ENCODE measurements at regions of chr19 and their contacts with region 1.

Region 1: GRCh38 chr19:1020868-1021425 is at the start of gene TMEM259:
- DNase-seq: peak; percentile 98
- H3K4me3 Mint-ChIP-seq: peak within 1 kb of the TSS; percentile 95
- H3K27ac Mint-ChIP-seq: peak within 1 kb of the TSS; percentile 99
- H3K4me1 Mint-ChIP-seq: peaks cover 43% of the 10 kb centered on the region
- H3K27me3 Mint-ChIP-seq: peaks cover 3% of the 10 kb centered on the region
- total RNA-seq, gene TMEM259: 107 to 109 TPM

Region 2: DNA sequence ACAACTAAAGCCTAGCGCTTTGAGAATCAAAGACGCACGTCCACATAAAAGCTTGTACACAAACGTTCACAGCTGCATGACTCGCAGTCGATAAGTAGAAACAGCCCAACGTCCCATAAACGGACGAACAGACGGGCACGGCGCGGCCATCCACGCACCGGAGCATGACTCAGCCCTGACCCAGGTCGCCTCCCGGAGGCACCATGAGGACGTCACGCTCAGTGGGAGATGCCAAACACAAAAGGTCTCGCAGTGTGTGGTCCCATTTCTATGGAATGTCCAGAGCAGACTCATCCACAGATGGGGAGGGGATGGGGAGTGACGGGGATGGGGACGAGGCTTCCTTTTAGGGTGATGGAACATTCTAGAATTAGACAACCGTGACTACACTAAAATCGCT is 397.0 kb before region 1 on chr19:
- CTCF ChIA-PET with region 1: no interaction called
- POLR2A ChIA-PET with region 1: no interaction called
- intact Hi-C with region 1: no loop called
- DNase-seq: no peak
- H3K4me3 Mint-ChIP-seq: no peak overlapping the region
- H3K27ac Mint-ChIP-seq: no peak overlapping the region
- H3K4me1 Mint-ChIP-seq: peaks cover 2% of the 10 kb centered on the region
- H3K27me3 Mint-ChIP-seq: no peaks in the 10 kb centered on the region

Region 3: DNA sequence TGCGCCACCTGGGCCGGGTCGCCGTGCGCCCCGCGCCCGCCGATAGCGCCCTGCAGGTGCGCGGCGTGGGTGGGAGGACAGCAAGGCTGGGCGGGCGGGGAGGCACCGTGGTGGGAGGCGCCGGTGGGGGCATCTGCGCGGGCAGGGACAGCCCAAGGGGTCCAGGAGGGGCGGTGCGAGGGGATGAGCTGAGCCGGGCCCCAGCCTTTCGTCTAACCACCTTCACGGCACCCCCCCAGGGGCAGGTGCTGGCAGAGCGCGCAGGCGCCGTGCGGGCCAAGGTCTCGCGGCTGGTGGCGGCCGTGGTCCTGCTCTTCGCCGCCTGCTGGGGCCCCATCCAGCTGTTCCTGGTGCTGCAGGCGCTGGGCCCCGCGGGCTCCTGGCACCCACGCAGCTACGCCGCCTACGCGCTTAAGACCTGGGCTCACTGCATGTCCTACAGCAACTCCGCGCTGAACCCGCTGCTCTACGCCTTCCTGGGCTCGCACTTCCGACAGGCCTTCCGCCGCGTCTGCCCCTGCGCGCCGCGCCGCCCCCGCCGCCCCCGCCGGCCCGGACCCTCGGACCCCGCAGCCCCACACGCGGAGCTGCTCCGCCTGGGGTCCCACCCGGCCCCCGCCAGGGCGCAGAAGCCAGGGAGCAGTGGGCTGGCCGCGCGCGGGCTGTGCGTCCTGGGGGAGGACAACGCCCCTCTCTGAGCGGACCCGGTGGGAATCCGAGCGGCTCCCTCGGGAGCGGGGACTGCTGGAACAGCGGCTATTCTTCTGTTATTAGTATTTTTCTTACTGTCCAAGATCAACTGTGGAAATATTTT is 100.7 kb before region 1 on chr19:
- CTCF ChIA-PET with region 1: no interaction called
- POLR2A ChIA-PET with region 1: interaction called, 5 read pairs
- intact Hi-C with region 1: loop called (anchors 2 kb)
- DNase-seq: peak; percentile 78
- H3K4me3 Mint-ChIP-seq: peak overlapping the region; percentile 75
- H3K27ac Mint-ChIP-seq: peak overlapping the region; percentile 85
- H3K4me1 Mint-ChIP-seq: peaks cover 19% of the 10 kb centered on the region
- H3K27me3 Mint-ChIP-seq: no peaks in the 10 kb centered on the region

Region 4: DNA sequence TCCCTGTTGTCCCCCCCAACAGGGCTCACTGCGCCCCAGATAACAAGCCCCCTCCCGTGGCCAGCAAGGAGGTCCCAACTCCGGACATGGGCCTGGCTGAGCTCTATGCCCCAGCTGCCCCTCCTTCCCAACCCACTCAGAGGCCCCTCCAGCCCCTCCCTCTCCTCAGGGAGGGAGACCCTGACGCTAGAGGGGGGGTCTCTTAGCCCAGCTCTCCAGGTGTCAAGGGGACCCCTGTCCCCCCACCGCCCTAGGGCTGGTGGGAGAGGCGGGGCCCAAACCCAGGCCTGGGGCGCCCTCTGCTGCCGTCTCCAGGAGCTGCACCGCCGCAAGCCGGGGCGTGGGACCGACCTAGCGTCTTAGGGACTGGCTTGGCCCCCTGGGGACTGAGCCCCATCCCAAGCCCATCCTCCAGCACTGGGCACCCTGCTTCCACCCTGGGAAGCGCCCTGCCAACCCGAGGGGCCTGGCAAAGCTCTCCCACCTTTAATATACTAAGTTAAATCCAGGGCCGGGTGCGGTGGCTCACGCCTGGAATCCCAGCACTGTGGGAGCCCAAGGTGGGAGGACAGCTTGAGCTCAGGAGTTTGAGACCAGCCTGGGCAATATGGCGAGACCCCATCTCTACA is 19.3 kb before region 1 on chr19:
- CTCF ChIA-PET with region 1: interaction called, 3 read pairs
- POLR2A ChIA-PET with region 1: no interaction called
- intact Hi-C with region 1: loop called (anchors 2 kb)
- DNase-seq: peak; percentile 78
- H3K4me3 Mint-ChIP-seq: no peak overlapping the region
- H3K27ac Mint-ChIP-seq: no peak overlapping the region
- H3K4me1 Mint-ChIP-seq: peaks cover 11% of the 10 kb centered on the region
- H3K27me3 Mint-ChIP-seq: peaks cover 29% of the 10 kb centered on the region

Region 5: DNA sequence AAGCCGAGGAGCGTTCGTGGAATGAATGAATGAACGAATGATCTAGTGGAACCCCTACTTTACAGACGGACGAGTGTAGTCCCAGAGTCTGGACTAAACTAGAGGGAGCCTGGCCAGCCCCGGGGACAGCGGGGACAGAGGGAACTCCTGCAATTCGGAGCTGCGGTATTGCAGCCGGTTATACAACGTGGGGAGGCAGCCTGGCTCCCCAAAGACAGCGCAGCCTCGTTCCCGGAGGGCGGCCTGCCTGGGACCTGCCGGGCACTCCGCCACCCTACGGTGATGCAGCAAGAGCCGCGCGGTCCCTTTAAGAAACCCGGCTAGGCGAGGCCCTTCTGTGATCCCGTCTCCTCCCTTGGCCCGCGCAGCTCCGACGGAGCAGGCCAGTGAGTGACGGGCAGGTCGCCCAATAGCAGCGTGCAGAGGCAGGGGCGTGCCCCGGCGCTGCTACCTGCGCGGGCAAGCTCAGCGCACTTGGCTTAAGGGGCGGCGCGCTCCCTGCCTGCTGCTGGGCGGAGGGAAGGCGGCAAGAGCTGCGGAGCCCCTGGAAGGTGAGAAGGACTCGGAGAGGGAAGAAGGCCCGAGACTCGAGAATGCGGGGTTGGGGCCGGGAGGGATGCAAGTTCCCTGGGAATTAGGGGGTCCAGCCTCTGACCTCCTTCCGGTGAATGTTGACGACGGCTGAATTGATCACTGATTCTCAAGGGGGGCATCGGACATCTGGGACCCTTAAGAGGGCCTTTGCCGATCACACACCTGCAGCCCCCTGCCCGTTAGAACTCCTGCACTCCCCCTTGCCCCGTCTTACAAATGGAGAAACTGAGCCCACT is 18.9 kb after region 1 on chr19 and contains the start of gene ABCA7:
- CTCF ChIA-PET with region 1: interaction called, 5 read pairs
- POLR2A ChIA-PET with region 1: interaction called, 23 read pairs
- intact Hi-C with region 1: loop called (anchors 2 kb)
- DNase-seq: peak; percentile 99
- H3K4me3 Mint-ChIP-seq: peak within 1 kb of the TSS; percentile 84
- H3K27ac Mint-ChIP-seq: peak within 1 kb of the TSS; percentile 82
- H3K4me1 Mint-ChIP-seq: peaks cover 41% of the 10 kb centered on the region
- H3K27me3 Mint-ChIP-seq: no peaks in the 10 kb centered on the region
- total RNA-seq, gene ABCA7: 28.3 to 29.3 TPM

Region 6: DNA sequence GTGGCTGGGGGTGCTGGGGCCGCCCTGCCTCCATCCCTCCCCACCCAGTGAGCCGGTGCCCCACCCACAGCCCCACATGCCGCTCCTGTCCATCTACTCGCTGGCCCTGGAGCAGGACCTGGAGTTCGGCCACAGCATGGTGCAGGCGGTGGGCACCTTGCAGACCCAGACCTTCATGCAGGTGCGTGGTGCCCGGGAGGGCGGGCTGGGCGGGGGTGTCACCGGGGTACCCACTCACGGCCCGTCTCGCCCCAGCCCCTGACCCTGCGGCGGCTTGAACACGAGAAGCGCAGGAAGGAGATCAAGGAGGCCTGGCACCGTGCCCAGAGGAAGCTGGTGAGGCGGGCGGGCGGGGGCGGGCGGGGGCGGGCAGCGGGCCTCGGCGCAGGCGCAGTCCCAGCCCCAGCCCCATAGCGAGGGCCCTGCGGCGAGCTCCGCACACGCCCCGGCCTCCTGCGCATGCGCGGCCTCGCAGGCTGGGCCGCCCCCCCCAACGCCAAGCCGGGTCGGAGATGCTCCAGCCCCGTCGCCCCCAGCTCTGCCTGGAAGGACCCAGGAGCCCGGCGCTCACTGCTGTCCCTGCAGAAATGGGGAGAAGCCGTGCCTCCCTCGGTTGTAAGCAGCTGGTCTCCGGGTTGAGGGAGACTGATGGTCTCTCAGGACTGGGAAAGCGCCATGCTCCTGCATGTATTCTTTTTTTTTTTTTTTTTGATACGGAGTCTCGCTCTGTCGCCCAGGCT is 53.8 kb after region 1 on chr19:
- CTCF ChIA-PET with region 1: no interaction called
- POLR2A ChIA-PET with region 1: interaction called, 5 read pairs
- intact Hi-C with region 1: loop called (anchors 1 kb)
- DNase-seq: peak; percentile 91
- H3K4me3 Mint-ChIP-seq: peak overlapping the region; percentile 55
- H3K27ac Mint-ChIP-seq: peak overlapping the region; percentile 90
- H3K4me1 Mint-ChIP-seq: peaks cover 61% of the 10 kb centered on the region
- H3K27me3 Mint-ChIP-seq: no peaks in the 10 kb centered on the region

Region 7: DNA sequence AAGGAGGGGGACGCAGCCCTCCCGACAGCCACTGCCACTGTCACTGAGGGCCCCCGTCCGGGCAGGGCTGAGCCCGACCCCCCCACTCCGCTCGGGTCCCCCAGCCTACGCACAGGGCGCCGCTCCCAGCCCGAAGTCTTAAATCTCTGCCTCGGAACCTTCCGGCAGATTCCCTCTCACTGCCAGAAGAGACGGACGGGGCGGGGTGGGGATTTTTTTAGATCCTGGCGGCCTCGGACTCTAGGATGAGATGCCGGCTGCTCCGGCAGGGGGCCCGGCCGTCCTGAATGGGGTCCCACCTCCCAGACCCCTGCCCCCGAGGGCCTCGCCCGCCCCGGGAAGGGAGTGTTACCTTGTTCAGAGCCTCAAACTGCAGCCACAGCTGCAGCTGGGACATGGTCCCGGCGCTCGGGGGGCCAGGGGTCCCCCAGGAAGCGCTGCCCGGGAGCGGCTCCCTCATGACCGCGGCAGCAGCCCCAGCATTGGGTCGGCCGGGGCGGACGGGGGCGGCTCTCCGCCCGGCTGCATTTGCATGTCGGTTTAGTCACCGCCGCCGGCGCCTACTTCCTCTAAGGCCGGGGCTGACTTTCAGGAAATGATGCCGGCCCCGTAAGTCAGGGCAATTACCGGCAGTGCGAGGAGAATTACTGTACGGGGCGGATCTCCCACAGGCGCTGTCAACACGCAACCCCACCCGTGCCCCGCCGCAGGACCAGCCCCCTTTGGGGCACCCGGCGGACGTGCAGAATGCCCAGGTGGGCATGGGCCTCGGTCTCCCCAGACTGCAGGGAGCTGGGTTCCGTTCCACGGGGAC is 111.0 kb after region 1 on chr19:
- CTCF ChIA-PET with region 1: no interaction called
- POLR2A ChIA-PET with region 1: interaction called, 3 read pairs
- intact Hi-C with region 1: loop called (anchors 1 kb)
- DNase-seq: peak; percentile 96
- H3K4me3 Mint-ChIP-seq: peak overlapping the region; percentile 94
- H3K27ac Mint-ChIP-seq: peak overlapping the region; percentile 96
- H3K4me1 Mint-ChIP-seq: peaks cover 44% of the 10 kb centered on the region
- H3K27me3 Mint-ChIP-seq: no peaks in the 10 kb centered on the region